K562 (cell line): ENCODE measurements at regions of chr2 and their contacts with region 1.

Region 1: GRCh38 chr2:30686000-30686399 is 121.2 kb downstream of the CAPN13 start:
- DNase-seq: peak; percentile 31 to 43 (median 35)
- ATAC-seq: peak; percentile 87
- H3K4me3 ChIP-seq: no peak overlapping the region
- H3K27ac ChIP-seq: no peak overlapping the region
- H3K4me1 ChIP-seq: no peaks in the 10 kb centered on the region
- H3K27me3 ChIP-seq: peaks cover 11 to 65% of the 10 kb centered on the region in 2 experiments; a peak in 4 of 5 replicates
- CTCF ChIP-seq: peak; percentile 51 to 65 (median 56)
- EP300 ChIP-seq: no peak
- POLR2A ChIP-seq: no peak
- RAD21 ChIP-seq: peak in 1 of 2 experiments; percentile 28; a peak in 2 of 4 replicates

Region 2: DNA sequence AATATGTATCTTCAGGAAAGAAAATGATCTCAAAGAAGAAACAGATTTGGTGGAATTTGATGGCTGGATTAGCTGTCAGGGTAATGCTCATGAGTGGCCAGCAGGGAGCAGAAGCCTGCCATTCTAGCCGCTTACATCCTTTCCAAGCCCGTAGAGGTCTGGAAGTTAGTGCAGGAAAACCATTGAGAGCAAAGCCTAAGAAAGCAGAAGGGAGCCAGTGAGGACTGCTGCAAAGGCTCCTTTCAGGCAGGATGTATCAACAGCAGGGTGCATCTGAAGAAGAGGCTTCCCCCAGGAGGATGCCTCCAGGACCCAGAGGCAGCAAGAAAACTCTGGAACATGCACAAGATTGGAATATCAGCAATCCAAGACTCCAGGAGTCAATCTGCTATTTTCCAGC is 477.5 kb before region 1 on chr2:
- CTCF ChIA-PET with region 1: no interaction called
- POLR2A ChIA-PET with region 1: no interaction called
- in situ Hi-C with region 1: no loop called
- intact Hi-C with region 1: loop called (anchors 5 kb)
- DNase-seq: peak; percentile 53 to 75 (median 66)
- ATAC-seq: peak; percentile 91
- H3K4me3 ChIP-seq: no peak overlapping the region
- H3K27ac ChIP-seq: no peak overlapping the region
- H3K4me1 ChIP-seq: peaks cover 2 to 3% of the 10 kb centered on the region in 2 experiments; a peak in 2 of 5 replicates
- H3K27me3 ChIP-seq: no peaks in the 10 kb centered on the region
- CTCF ChIP-seq: peak; percentile 83 to 93 (median 89)
- EP300 ChIP-seq: no peak
- POLR2A ChIP-seq: no peak
- RAD21 ChIP-seq: peak; percentile 95 to 97

Region 3: DNA sequence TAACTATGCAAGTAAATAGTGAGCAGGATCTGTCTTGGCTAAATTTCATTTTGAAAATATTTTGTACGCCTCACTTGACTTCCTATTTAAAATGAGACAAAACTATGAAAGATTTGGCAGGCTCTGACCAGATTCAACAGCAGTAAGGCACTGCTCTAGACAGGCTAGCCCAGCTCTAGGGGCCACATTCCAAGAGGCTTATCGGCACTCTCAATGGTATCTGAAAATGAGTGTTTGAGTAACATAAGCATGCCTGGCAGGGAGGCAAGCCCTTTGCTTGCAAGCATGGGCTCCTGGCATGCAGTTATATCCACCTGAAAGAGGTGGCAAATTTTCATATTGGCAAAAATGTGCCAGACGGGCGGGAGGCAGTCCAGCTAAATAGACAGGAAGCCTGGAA is 110.7 kb after region 1 on chr2:
- CTCF ChIA-PET with region 1: no interaction called
- POLR2A ChIA-PET with region 1: no interaction called
- in situ Hi-C with region 1: no loop called
- intact Hi-C with region 1: no loop called
- DNase-seq: no peak
- ATAC-seq: no peak
- H3K4me3 ChIP-seq: no peak overlapping the region
- H3K27ac ChIP-seq: no peak overlapping the region
- H3K4me1 ChIP-seq: no peaks in the 10 kb centered on the region
- H3K27me3 ChIP-seq: peaks cover 3 to 16% of the 10 kb centered on the region in 2 experiments; a peak in 3 of 5 replicates
- CTCF ChIP-seq: no peak
- EP300 ChIP-seq: no peak
- POLR2A ChIP-seq: no peak
- RAD21 ChIP-seq: no peak